CD8-positive, alpha-beta memory T cell (primary cell): ENCODE measurements at regions of chr6 and their contacts with region 1.

Region 1: GRCh38 chr6:36765594-36766398 is 68.2 kb downstream of the RAB44 start:
- DNase-seq: peak; percentile 68 to 82 (median 69)
- H3K4me3 ChIP-seq: no peak overlapping the region
- H3K4me3 Mint-ChIP-seq: peak overlapping the region in 2 of 7 donors; percentile 29 to 40
- H3K27ac ChIP-seq: no peak overlapping the region
- H3K27ac Mint-ChIP-seq: peak overlapping the region in 7 of 8 donors; percentile 38 to 87 (median 52)
- H3K4me1 ChIP-seq: peaks cover 37% of the 10 kb centered on the region
- H3K4me1 Mint-ChIP-seq: peaks cover 31 to 35% (median 32%) of the 10 kb centered on the region in 3 donors
- H3K27me3 ChIP-seq: no peaks in the 10 kb centered on the region
- H3K27me3 Mint-ChIP-seq: peaks cover 0 to 2% of the 10 kb centered on the region in 2 donors

Region 2: DNA sequence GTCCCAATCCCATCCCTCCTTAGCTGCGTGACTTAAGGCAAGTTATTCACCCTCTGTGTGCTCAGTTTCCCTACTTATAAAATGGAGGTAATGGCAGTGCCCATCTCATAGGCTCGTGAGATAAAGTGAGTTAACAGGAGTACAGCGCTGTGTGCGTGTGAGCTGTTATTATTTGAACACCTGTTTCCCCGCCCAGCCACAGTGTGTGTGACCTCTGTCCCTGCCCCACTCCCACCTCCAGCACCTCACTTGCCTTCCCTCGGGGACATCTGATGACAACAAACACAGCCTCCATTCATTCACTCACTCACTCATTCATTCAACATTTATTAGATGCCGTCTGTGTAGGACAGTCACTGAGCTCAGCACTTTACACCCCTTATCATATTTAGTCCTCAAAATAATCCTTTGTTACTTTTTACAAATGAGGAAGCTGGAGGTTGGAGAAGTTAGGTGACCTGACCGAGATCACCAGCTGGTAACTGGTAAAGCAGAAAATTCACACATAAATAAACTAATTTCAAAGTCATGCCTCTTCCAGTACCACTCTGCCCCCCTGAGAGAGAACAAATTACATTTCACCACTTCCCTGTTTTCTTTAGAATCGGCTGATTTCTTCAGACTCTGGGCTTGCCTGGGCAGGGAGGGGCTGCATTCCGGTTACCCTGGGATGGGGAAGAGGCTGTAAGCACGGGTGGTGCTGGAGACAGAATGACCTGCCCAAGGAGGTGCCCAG is 14.8 kb after region 1 on chr6:
- CTCF ChIA-PET with region 1: interaction called, 70 read pairs
- POLR2A ChIA-PET with region 1: no interaction called
- DNase-seq: no peak
- H3K4me3 ChIP-seq: no peak overlapping the region
- H3K4me3 Mint-ChIP-seq: no peak overlapping the region
- H3K27ac ChIP-seq: no peak overlapping the region
- H3K27ac Mint-ChIP-seq: peak overlapping the region in 2 of 8 donors; percentile 48 to 51
- H3K4me1 ChIP-seq: peaks cover 4% of the 10 kb centered on the region
- H3K4me1 Mint-ChIP-seq: peaks cover 4 to 8% (median 4%) of the 10 kb centered on the region in 3 donors
- H3K27me3 ChIP-seq: peaks cover 4% of the 10 kb centered on the region
- H3K27me3 Mint-ChIP-seq: peaks cover 0 to 4% of the 10 kb centered on the region in 2 donors

Region 3: GRCh38 chr6:36984581-36985416 is 219.0 kb after region 1 on chr6:
- CTCF ChIA-PET with region 1: no interaction called
- POLR2A ChIA-PET with region 1: no interaction called
- DNase-seq: peak; percentile 36 to 68 (median 49)
- H3K4me3 ChIP-seq: peak overlapping the region; percentile 91
- H3K4me3 Mint-ChIP-seq: no peak overlapping the region
- H3K27ac ChIP-seq: peak overlapping the region; percentile 82
- H3K27ac Mint-ChIP-seq: no peak overlapping the region
- H3K4me1 ChIP-seq: peaks cover 38% of the 10 kb centered on the region
- H3K4me1 Mint-ChIP-seq: peaks cover 31 to 40% (median 32%) of the 10 kb centered on the region in 3 donors
- H3K27me3 ChIP-seq: no peaks in the 10 kb centered on the region
- H3K27me3 Mint-ChIP-seq: peaks cover 0 to 7% of the 10 kb centered on the region in 2 donors